K562 (cell line): ENCODE measurements at regions of chr11 and their contacts with region 1.

Region 1: GRCh38 chr11:10735481-10736475 is 15.3 kb upstream of the CTR9 start:
- DNase-seq: peak; percentile 95 to 98 (median 96)
- ATAC-seq: peak; percentile 100
- H3K4me3 ChIP-seq: peak overlapping the region; percentile 27; the same call in 1 of the 2 replicates
- H3K27ac ChIP-seq: peak overlapping the region; percentile 76; the same call in 2 of the 3 replicates
- H3K4me1 ChIP-seq: peaks cover 7% of the 10 kb centered on the region in 2 experiments; a peak in 4 of 5 replicates
- H3K27me3 ChIP-seq: no peaks in the 10 kb centered on the region
- CTCF ChIP-seq: peak; percentile 97 to 98 (median 98)
- EP300 ChIP-seq: peak; percentile 28; the same call in 1 of the 2 replicates
- POLR2A ChIP-seq: no peak
- RAD21 ChIP-seq: peak; percentile 99 to 100

Region 2: DNA sequence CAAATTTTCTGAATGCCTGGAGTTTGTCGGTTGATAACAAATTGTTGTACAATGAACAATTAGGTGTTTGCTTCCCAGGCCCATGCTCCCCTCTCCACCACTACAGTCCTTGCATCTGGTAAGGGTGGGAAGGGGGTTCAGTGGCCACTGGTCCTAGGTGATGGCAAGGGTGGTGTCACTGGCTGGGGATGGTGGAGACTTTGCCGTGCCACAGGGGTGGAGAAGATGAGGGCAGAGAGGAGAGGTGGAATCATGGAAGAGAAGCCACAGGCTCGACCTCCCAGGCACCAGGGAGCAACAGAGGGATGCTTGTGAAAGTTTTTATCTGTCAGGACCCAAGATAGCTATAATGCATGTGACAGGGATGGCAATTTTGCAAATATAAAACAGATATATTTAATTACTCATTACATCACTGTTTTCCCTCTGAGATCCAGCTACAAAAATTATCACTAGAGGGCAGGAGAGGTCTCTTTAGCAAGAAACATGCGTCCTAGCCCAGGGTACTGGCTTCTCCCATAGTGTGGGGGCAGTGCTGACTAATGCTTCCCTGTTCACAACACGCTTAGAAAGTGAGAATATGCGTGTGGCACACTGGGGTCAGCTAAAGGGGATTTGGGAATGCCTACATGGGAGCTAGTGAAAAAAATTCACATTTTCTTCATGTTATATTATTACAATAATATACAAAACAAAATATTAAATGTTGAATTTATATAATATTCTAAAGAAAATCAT is 329.8 kb before region 1 on chr11:
- CTCF ChIA-PET with region 1: interaction called, 39 read pairs
- POLR2A ChIA-PET with region 1: no interaction called
- in situ Hi-C with region 1: loop called (anchors 5 kb)
- intact Hi-C with region 1: loop called (anchors 1 kb)
- DNase-seq: peak; percentile 79 to 90 (median 82)
- ATAC-seq: peak; percentile 98
- H3K4me3 ChIP-seq: no peak overlapping the region
- H3K27ac ChIP-seq: 0 out of 3 replicates have a peak overlapping the region, but pooled peaks have one; percentile 26
- H3K4me1 ChIP-seq: peaks cover 9 to 18% of the 10 kb centered on the region in 2 experiments; a peak in 4 of 5 replicates
- H3K27me3 ChIP-seq: peaks cover 0 to 5% of the 10 kb centered on the region in 2 experiments; a peak in 1 of 5 replicates
- CTCF ChIP-seq: peak; percentile 81 to 97 (median 95)
- EP300 ChIP-seq: peak; percentile 19; the same call in 1 of the 2 replicates
- POLR2A ChIP-seq: no peak
- RAD21 ChIP-seq: peak; percentile 92 to 96

Region 3: DNA sequence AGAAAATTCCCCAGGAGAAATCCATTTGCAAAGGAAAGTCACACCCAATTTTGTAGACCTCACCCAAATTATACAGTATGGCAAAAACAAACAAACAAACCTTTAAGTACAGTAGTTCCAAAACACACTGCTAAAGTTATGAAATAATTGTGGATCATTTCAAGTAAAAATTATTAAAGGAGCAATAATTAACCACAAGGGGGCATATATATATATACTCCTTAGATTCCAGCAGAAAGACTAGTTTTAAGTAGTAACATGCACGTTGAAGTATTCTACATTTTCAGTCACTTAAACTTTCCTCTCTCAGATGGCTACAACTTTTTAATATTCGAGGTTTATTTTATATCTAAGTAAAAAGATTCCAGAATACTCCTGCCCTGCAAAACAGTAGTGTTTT is 221.6 kb before region 1 on chr11:
- CTCF ChIA-PET with region 1: interaction called, 13 read pairs
- POLR2A ChIA-PET with region 1: no interaction called
- in situ Hi-C with region 1: loop called (anchors 25 kb)
- intact Hi-C with region 1: loop called (anchors 5 kb)
- DNase-seq: no peak
- ATAC-seq: no peak
- H3K4me3 ChIP-seq: no peak overlapping the region
- H3K27ac ChIP-seq: no peak overlapping the region
- H3K4me1 ChIP-seq: no peaks in the 10 kb centered on the region
- H3K27me3 ChIP-seq: no peaks in the 10 kb centered on the region
- CTCF ChIP-seq: peak in 2 of 3 experiments; percentile 9 to 36; a peak in 2 of 6 replicates
- EP300 ChIP-seq: no peak
- POLR2A ChIP-seq: no peak
- RAD21 ChIP-seq: peak in 1 of 2 experiments; percentile 32; a peak in 3 of 4 replicates

Region 4: DNA sequence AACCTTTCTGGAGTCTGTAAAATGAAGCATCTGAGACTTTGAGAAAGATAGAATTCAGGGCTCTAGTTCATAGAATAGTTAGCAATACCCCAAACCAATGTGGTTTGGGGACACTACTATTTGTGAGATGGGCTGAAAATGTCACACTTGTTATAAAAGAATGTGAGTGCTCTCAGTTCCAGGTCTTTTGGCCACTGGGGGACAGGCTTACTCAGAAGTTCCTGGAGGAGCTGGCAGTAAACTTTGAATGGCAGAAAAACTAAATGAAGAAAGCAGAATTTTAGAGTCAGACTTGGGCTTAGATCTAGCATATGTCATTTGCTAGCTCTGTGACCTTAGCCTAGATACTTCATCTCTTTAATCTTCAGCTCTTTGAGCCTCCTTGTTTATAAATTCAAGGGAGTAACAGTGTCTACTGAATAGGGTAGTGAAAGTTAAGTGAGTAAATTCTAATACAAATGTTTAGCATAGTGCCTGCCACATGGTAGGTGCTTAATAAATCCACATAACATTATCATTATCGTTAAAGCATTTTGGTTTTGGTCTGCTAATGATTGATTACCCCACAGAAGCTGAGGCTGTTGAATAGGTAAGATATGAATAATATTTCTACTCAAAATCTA is 171.0 kb before region 1 on chr11:
- CTCF ChIA-PET with region 1: interaction called, 11 read pairs
- POLR2A ChIA-PET with region 1: interaction called, 4 read pairs
- in situ Hi-C with region 1: no loop called
- intact Hi-C with region 1: loop called (anchors 1 kb)
- DNase-seq: peak in 1 of 4 experiments; percentile 25
- ATAC-seq: peak; percentile 67
- H3K4me3 ChIP-seq: no peak overlapping the region
- H3K27ac ChIP-seq: no peak overlapping the region
- H3K4me1 ChIP-seq: peaks cover 0 to 6% of the 10 kb centered on the region in 2 experiments; a peak in 2 of 5 replicates
- H3K27me3 ChIP-seq: no peaks in the 10 kb centered on the region
- CTCF ChIP-seq: peak; percentile 45 to 66 (median 49)
- EP300 ChIP-seq: no peak
- POLR2A ChIP-seq: no peak
- RAD21 ChIP-seq: peak; percentile 81 to 82

Region 5: GRCh38 chr11:10653926-10654810 is 81.6 kb before region 1 on chr11:
- CTCF ChIA-PET with region 1: interaction called, 5 read pairs
- POLR2A ChIA-PET with region 1: no interaction called
- in situ Hi-C with region 1: no loop called
- intact Hi-C with region 1: loop called (anchors 1 kb)
- DNase-seq: peak; percentile 69 to 89 (median 72)
- ATAC-seq: peak; percentile 80
- H3K4me3 ChIP-seq: no peak overlapping the region
- H3K27ac ChIP-seq: peak overlapping the region; percentile 47; the same call in 2 of the 3 replicates
- H3K4me1 ChIP-seq: peaks cover 29 to 35% of the 10 kb centered on the region in 2 experiments
- H3K27me3 ChIP-seq: no peaks in the 10 kb centered on the region
- CTCF ChIP-seq: peak; percentile 74 to 88 (median 84)
- EP300 ChIP-seq: peak; percentile 10; the same call in 1 of the 2 replicates
- POLR2A ChIP-seq: no peak
- RAD21 ChIP-seq: peak; percentile 92 to 96